Dorsolateral prefrontal cortex (tissue), 120 donors: ENCODE measurements at regions of chr20 and their contacts with region 1.

Region 1: GRCh38 chr20:33299111-33299603 is 16.1 kb downstream of the BPIFB1 start:
- DNase-seq: peak; percentile 56 to 84 (median 72)
- H3K4me3 ChIP-seq: peak overlapping the region in 12 of 59 donors; percentile 10 to 45 (median 22)
- H3K27ac ChIP-seq: no peak overlapping the region
- H3K27me3 ChIP-seq: no peaks in the 10 kb centered on the region
- CTCF ChIP-seq: peak; percentile 78 to 99 (median 94)

Region 2: DNA sequence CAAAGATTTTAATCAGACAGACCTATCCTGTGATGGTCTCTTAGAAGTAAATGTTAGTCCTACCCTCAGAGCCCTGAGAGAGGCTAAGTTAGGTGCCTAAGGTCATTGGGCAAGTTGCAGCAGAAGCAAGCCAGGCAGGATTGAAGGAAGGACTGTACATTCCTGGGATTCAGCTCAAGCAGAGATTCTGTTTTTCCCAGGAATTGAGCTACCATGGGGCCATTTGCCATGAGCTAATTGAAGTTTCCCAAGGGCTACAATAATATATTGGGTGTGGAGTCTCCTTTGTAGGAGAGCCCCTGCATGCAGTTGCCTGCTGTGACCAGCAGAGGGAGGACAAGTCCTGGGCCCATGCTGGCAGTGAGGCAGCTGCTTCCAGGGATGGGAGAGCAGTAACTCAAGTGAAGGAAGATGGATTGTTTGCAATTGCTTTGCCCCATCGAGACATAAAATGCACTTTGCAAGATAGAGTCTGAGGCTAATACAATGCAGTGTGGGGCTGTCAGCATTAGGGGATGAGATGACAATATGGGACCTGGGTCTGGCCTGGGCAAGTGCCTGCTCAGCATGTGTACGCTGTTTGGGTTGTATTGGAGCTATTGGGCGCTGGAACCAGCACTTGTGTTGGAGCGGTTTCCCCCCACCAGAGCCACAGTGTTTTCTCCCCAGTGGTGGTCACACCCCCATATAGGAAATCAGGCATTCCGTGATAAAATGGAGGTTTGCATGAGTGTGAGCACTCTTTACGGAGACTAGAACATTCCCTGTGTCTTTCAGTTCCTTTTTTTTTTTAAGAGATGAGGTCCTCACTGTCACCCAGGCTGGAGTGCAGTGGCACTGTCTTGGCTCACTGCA is 509.0 kb before region 1 on chr20:
- intact Hi-C with region 1: loop called (anchors 10 kb)
- DNase-seq: peak; percentile 76 to 88 (median 82)
- H3K4me3 ChIP-seq: no peak overlapping the region
- H3K27ac ChIP-seq: peak overlapping the region in 1 of 59 donors; percentile 21
- H3K27me3 ChIP-seq: no peaks in the 10 kb centered on the region
- CTCF ChIP-seq: peak; percentile 82 to 99 (median 98)

Region 3: GRCh38 chr20:33097001-33097400 is 202.2 kb before region 1 on chr20:
- intact Hi-C with region 1: loop called (anchors 2 to 5 kb)
- DNase-seq: no peak
- H3K4me3 ChIP-seq: no peak overlapping the region
- H3K27ac ChIP-seq: no peak overlapping the region
- H3K27me3 ChIP-seq: no peaks in the 10 kb centered on the region
- CTCF ChIP-seq: no peak

Region 4: GRCh38 chr20:33252460-33252859 is 46.7 kb before region 1 on chr20:
- intact Hi-C with region 1: no loop called
- DNase-seq: no peak
- H3K4me3 ChIP-seq: no peak overlapping the region
- H3K27ac ChIP-seq: no peak overlapping the region
- H3K27me3 ChIP-seq: no peaks in the 10 kb centered on the region
- CTCF ChIP-seq: no peak

Region 5: DNA sequence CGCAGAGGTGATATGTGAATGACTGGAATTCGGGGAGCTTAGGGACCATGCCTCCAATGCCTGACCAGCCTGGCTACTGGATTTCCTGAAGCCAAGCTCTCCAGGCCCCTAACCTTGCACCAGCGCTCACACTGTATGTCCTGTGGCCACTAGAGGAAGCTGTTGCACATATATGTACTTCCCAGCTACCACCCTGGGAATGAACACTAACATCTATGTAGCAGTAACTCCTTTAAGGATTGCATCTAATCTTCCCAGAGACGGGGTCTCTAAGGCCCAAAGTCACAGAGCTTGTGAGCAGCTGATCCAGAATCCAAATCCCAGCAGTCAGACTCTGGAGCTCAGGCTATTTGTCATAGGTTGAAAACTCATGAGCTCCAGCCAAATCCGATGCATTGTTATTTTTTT is 36.5 kb before region 1 on chr20:
- intact Hi-C with region 1: loop called in 1 of 2 experiments (anchors 5 kb)
- DNase-seq: peak in 9 of 10 donors; percentile 37 to 73 (median 59)
- H3K4me3 ChIP-seq: peak overlapping the region in 4 of 59 donors; percentile 2 to 28 (median 8)
- H3K27ac ChIP-seq: peak overlapping the region in 58 of 59 donors; percentile 40 to 94 (median 85)
- H3K27me3 ChIP-seq: no peaks in the 10 kb centered on the region
- CTCF ChIP-seq: peak; percentile 18 to 83 (median 69)